ENCODE measurements at regions of chr20 and their contacts with region 1.

Region 1: GRCh38 chr20:23050847-23051631 is 1.6 kb upstream of the THBD start:
- H3K4me3 ChIP-seq: peak overlapping the region; percentile 29
- H3K27ac ChIP-seq: no peak overlapping the region; the same call in 1 of the 2 replicates
- H3K4me1 ChIP-seq: no peaks in the 10 kb centered on the region
- CTCF ChIP-seq: peak; percentile 39

Region 2: DNA sequence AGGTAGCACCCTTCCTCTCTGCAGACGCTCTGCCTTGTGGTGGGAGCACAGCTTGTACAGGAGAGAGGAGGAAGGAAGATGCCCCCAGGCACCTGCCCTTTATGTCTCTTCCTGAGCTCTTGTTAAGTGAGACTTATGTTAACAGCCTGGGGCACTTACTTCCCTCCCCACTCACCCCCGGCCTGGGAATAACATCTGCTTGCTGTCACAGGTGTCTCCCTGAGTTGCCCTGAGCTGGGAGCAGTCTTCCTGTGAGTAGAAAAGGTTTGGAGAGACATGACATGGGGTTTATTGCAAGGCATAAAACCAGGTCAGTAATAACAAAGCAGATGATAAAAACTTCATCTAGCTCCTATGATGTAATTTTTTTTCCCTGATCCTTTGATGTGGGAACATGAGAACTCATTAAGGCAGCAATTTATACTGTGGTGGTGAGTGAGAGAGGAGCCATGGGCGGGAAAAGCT is 14.0 kb before region 1 on chr20:
- CTCF ChIA-PET with region 1: interaction called, 12 read pairs
- POLR2A ChIA-PET with region 1: no interaction called
- H3K4me3 ChIP-seq: no peak overlapping the region
- H3K27ac ChIP-seq: no peak overlapping the region
- H3K4me1 ChIP-seq: no peaks in the 10 kb centered on the region; the same call in 1 of the 2 replicates
- CTCF ChIP-seq: no peak

Region 3: DNA sequence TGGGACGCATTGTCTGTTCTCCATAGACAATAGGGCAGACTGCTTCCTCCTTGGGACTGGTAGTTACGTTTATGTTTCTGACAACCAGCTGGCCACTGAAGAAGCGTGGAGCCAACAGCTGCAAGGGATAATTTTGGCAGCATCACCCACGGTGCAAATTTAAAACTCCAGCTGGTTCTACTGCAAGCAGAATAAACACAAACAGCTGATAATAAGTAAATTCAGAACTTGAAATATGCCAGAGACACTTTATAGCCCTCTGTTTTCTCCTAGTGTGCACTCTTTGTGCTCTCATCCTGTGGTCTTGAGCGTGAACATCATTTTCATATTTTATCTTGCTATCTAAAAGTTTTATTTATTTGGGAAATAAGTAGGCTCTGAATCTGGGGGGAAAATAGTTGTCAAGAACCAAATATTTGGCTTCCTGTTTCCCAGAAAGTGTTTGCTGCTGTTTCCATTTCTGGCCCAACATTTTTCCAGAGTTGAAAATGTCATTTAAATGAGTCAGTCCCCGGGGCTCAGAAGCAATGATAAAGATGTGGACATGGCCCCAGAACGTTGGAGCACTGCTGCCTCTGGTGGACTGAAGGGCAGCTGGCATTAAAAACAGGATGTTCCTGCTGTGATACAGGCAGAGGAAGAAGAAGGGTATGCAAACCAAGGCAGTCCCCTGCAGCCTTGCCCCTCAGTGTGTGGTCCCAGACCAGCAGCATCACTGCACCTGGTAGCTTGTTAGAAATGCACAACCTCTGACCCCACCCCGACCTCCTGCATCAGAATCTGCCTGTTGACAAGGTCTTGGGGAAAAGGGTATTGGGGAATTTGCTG is 10.9 kb after region 1 on chr20:
- CTCF ChIA-PET with region 1: interaction called, 15 read pairs
- POLR2A ChIA-PET with region 1: interaction called, 3 read pairs
- H3K4me3 ChIP-seq: no peak overlapping the region
- H3K27ac ChIP-seq: no peak overlapping the region
- H3K4me1 ChIP-seq: peaks cover 5% of the 10 kb centered on the region; the same call in 1 of the 2 replicates
- CTCF ChIP-seq: no peak